Activated CD4-positive, alpha-beta T cell treated with anti-CD3 and anti-CD28 coated beads, Interleukin-2, amount 10 ng/mL, durations not matched to agents 24 days and 14 days (primary cell): ENCODE measurements at regions of chr7 and their contacts with region 1.

Region 1: DNA sequence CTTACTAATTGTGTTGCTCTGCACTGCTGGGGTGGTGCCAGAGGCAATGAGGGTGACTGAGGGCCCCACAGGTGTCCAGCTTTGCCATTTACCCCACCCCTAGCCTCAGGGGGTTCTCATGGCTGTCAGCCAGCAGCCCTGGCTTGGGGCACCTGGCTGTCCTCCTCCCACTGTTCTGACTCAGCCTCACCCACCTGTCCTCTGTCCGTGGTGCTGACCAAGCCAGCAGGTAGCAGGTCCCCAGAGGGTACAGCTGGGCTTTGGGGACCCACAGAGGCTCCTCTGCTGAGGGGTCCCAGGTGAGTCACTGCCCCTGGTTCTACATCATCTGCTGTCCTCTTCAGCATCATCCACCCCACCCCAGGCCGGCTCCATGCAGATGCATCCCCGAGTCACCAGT is 32.2 kb upstream of the ZNF716 start:
- DNase-seq: no peak
- H3K4me3 Mint-ChIP-seq: no peak overlapping the region
- H3K27ac Mint-ChIP-seq: no peak overlapping the region
- H3K4me1 Mint-ChIP-seq: no peaks in the 10 kb centered on the region
- H3K27me3 Mint-ChIP-seq: no peaks in the 10 kb centered on the region

Region 2: GRCh38 chr7:57404343-57404953 is 13.3 kb before region 1 on chr7:
- intact Hi-C with region 1: loop called (anchors 1 kb)
- DNase-seq: no peak
- H3K4me3 Mint-ChIP-seq: no peak overlapping the region
- H3K27ac Mint-ChIP-seq: no peak overlapping the region
- H3K4me1 Mint-ChIP-seq: no peaks in the 10 kb centered on the region
- H3K27me3 Mint-ChIP-seq: no peaks in the 10 kb centered on the region

Region 3: GRCh38 chr7:57438244-57438643 is 20.5 kb after region 1 on chr7:
- intact Hi-C with region 1: no loop called
- DNase-seq: peak; percentile 10
- H3K4me3 Mint-ChIP-seq: no peak overlapping the region
- H3K27ac Mint-ChIP-seq: no peak overlapping the region
- H3K4me1 Mint-ChIP-seq: no peaks in the 10 kb centered on the region
- H3K27me3 Mint-ChIP-seq: no peaks in the 10 kb centered on the region